ENCODE measurements at regions of chr17 and their contacts with region 1.

Region 1: DNA sequence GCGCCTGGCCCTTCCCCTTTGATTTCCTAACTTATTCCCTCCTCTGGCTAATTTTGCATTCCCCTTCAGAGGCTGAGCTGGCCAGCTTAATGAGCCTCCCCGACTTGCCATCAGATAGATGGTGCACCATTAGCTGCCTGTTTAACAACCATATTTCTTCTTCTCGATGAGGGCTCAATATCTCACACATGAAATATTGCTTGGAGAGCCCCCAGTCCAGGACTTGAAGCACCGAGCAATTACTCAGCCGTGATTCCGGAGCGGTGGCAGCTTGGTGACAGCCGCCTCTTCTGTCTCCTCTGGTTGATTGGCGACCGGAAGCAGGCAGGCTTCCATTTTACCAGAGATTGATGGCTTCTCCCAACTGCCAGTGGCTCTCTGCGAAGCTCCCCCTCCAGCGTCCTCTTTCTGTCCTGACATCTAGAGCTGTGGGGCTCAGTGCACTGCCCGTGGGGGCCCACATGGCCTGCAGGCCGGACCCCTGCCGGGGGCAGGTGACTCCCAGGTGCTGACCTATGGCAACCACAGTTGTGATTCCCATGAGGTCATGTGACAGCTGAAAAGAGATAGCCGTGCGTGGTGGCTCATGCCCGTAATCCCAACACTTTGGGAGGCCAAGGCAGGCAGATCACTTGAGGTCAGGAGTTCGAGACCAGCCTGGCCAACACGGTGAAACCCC is 133.7 kb upstream of the SEC14L1 start:
- DNase-seq: no peak
- H3K4me3 ChIP-seq: no peak overlapping the region
- H3K27ac ChIP-seq: no peak overlapping the region
- H3K4me1 ChIP-seq: no peaks in the 10 kb centered on the region
- H3K27me3 ChIP-seq: peaks cover 0 to 19% of the 10 kb centered on the region in 2 donors
- CTCF ChIP-seq: no peak
- POLR2A ChIP-seq: no peak

Region 2: GRCh38 chr17:75959051-75959838 is 1047.9 kb before region 1 on chr17:
- intact Hi-C with region 1: no loop called
- DNase-seq: no peak
- H3K4me3 ChIP-seq: no peak overlapping the region
- H3K27ac ChIP-seq: no peak overlapping the region
- H3K4me1 ChIP-seq: no peaks in the 10 kb centered on the region
- H3K27me3 ChIP-seq: no peaks in the 10 kb centered on the region
- CTCF ChIP-seq: no peak
- POLR2A ChIP-seq: no peak

Region 3: DNA sequence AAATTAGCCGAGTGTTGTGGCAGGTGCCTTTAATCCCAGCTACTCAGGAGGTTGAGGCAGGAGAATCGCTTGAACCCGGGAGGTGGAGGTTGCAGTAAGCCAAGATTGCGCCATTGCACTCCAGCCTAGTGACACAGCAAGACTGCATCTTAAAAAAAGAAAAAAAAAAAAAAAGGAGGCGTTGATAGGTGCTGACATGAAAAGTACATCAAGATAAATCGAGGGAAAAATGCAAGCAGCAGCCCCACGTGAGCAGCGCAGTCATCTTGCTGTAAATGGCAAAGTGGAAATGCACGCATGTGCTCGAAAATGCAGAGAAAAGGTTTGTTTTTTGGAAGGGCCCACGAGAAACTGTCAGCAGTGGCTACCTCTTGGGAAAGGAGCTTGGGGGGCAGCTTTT is 317.3 kb before region 1 on chr17:
- intact Hi-C with region 1: loop called (anchors 5 kb)
- DNase-seq: no peak
- H3K4me3 ChIP-seq: no peak overlapping the region
- H3K27ac ChIP-seq: no peak overlapping the region
- H3K4me1 ChIP-seq: peaks cover 0 to 4% of the 10 kb centered on the region in 2 donors
- H3K27me3 ChIP-seq: no peaks in the 10 kb centered on the region
- CTCF ChIP-seq: no peak
- POLR2A ChIP-seq: no peak